T-cell (primary cell): ENCODE measurements at regions of chrX and their contacts with region 1.

Region 1: GRCh38 chrX:154019633-154020528 is at the start of gene IRAK1:
- DNase-seq: peak in 25 of 35 experiments; percentile 13 to 70 (median 26)
- ATAC-seq: peak; percentile 80 to 83 (median 81)
- H3K4me3 ChIP-seq: peak within 1 kb of the TSS; percentile 49 to 55
- H3K4me3 Mint-ChIP-seq: peak within 1 kb of the TSS; percentile 80 to 88 (median 87)
- H3K27ac ChIP-seq: peak within 1 kb of the TSS; percentile 74
- H3K27ac Mint-ChIP-seq: peak within 1 kb of the TSS; percentile 92 to 94
- H3K4me1 ChIP-seq: peaks cover 0 to 46% of the 10 kb centered on the region in 2 experiments
- H3K4me1 Mint-ChIP-seq: peaks cover 5 to 23% (median 22%) of the 10 kb centered on the region in 3 donors
- H3K27me3 ChIP-seq: no peaks in the 10 kb centered on the region
- H3K27me3 Mint-ChIP-seq: peaks cover 0 to 8% of the 10 kb centered on the region in 2 donors
- total RNA-seq, gene IRAK1: 66.5 to 102 (median 85.0) TPM

Region 2: DNA sequence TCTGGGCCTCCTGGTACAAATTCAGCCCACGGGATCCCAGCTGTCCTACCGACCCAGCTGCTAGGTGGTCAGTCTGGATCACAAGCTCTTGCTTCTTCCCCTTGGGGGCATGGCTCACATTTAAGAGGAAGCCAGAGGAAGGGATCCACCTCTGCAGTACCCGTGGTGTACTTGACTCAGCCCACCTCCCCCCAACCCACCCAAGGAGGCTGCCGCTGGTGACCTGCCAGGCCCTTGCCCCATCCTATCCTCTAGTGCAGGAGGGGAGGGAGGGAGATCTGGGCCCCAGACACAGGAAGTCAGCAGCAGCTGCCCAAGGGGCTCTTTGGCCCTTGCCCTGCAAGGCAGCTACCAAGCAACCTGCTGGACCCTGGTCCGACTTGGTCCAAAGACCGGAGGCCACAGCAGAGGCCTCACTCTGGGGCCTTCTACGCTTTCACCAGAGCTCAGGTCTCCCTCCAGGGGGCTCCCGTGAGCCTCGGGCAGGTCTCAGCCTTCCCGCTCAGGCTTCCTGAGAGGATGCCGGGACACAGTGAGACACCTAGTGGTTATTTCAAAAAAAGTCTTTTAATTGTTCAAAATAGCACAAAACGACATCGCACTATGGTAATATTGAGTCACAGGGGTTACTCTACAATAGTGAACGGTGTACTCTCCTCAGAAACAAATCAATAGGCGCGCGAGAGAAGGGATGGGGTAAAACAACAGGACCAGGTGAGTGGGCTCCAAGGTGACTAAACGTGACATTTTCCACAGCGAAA is 72.7 kb before region 1 on chrX:
- CTCF ChIA-PET with region 1: no interaction called
- POLR2A ChIA-PET with region 1: no interaction called
- DNase-seq: peak; percentile 49 to 85 (median 70)
- ATAC-seq: peak; percentile 79 to 85 (median 82)
- H3K4me3 ChIP-seq: no peak overlapping the region
- H3K4me3 Mint-ChIP-seq: peak overlapping the region in 1 of 3 donors; percentile 52
- H3K27ac ChIP-seq: no peak overlapping the region
- H3K27ac Mint-ChIP-seq: peak overlapping the region; percentile 71 to 90
- H3K4me1 ChIP-seq: peaks cover 5 to 63% of the 10 kb centered on the region in 2 experiments
- H3K4me1 Mint-ChIP-seq: peaks cover 19 to 23% (median 20%) of the 10 kb centered on the region in 3 donors
- H3K27me3 ChIP-seq: no peaks in the 10 kb centered on the region
- H3K27me3 Mint-ChIP-seq: no peaks in the 10 kb centered on the region

Region 3: DNA sequence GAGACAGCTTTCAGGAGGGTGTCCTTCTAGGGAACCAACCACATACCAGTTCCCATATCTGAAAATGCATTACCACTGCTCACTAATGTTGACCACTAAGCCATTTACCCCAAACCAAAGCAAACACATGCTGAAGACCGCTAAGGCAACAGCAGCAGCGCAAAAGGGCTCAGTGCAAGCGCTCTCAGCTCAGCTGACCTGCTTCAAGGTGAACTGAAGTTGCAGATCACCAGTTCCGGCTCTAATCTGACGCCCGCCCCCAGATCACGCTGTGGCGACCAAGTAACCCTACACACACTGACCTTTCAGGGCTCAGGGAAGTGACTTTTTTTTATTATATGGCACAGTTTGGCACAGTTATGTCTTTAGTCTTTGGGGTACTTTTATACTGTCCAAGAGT is 71.8 kb after region 1 on chrX:
- CTCF ChIA-PET with region 1: interaction called in 1 of 2 experiments, 11 read pairs
- POLR2A ChIA-PET with region 1: interaction called in 1 of 2 experiments, 3 read pairs
- DNase-seq: peak in 1 of 35 experiments; percentile 9
- ATAC-seq: no peak
- H3K4me3 ChIP-seq: no peak overlapping the region
- H3K4me3 Mint-ChIP-seq: peak overlapping the region in 1 of 3 donors; percentile 9
- H3K27ac ChIP-seq: peak overlapping the region; percentile 53
- H3K27ac Mint-ChIP-seq: no peak overlapping the region
- H3K4me1 ChIP-seq: peaks cover 21 to 39% of the 10 kb centered on the region in 2 experiments
- H3K4me1 Mint-ChIP-seq: peaks cover 56 to 70% (median 63%) of the 10 kb centered on the region in 3 donors
- H3K27me3 ChIP-seq: no peaks in the 10 kb centered on the region
- H3K27me3 Mint-ChIP-seq: no peaks in the 10 kb centered on the region